ENCODE measurements at regions of chr20 and their contacts with region 1.

Region 1: DNA sequence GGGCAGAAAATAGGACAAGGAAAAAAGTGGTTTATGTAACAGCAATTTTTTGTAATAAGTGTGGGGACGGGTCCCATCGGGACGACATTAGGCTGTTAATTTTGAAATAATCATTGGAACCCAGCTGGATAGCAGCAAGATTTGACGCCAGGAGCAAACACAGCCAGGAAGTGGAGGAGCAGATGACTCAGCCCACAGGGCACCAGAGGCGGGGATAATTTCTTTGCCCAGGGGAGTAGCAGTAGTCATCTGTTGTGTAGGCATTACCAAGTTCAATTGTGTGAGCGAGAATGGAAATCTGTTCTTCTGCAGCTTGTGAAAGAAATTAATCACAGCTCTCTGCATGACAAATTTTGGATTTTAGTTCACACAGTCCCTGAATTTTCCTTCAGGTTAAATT is 22.6 kb upstream of the RIN2 start:
- DNase-seq: peak; percentile 70 to 84
- ATAC-seq: peak; percentile 96 to 97
- H3K4me3 ChIP-seq: no peak overlapping the region
- H3K27ac ChIP-seq: peak overlapping the region; percentile 66 to 81 (median 73)
- H3K4me1 ChIP-seq: peaks cover 10 to 30% of the 10 kb centered on the region in 2 donors
- H3K27me3 ChIP-seq: no peaks in the 10 kb centered on the region
- CTCF ChIP-seq: no peak
- POLR2A ChIP-seq: no peak

Region 2: DNA sequence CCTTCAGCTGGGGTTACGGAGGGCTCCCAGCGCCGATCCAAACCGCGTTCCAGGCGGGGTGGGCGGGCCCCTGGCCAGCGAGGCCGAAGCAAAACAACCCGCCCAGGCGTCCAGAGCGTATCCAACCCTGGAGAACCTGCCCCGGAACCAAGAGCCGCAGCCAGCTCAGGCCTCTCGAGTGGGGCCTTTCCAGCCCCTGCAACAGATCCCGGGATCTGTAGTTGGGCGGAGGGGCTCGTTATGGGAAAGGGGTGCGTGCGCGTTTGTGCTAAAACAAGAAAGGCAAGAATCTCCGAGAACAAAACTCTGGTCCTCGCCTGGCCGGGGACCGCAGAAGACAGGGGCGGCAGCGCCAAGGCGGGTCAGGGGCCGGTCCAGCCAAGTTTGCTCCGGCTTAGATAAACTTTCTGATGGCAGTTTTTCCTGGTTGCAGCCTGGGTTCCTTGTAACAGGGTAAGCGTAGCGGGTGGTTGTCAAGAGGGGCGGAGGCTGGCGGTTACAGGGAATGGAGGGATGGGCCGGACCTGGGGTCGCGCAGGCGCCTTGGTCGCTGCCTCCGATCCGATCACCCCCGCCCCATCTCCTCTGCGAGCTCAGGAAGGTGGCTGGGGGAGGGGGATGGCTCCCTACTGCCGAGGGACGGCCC is 22.2 kb after region 1 on chr20:
- in situ Hi-C with region 1: no loop called
- intact Hi-C with region 1: loop called (anchors 2 kb)
- DNase-seq: peak; percentile 89 to 91
- ATAC-seq: peak; percentile 67 to 72
- H3K4me3 ChIP-seq: peak overlapping the region; percentile 82 to 100 (median 94)
- H3K27ac ChIP-seq: peak overlapping the region; percentile 97 to 99 (median 98)
- H3K4me1 ChIP-seq: peaks cover 31 to 39% of the 10 kb centered on the region in 2 donors
- H3K27me3 ChIP-seq: no peaks in the 10 kb centered on the region
- CTCF ChIP-seq: no peak
- POLR2A ChIP-seq: peak; percentile 46 to 62

Region 3: GRCh38 chr20:19858466-19859371 is 123.3 kb after region 1 on chr20:
- in situ Hi-C with region 1: no loop called
- intact Hi-C with region 1: no loop called
- DNase-seq: peak in 1 of 2 donors; percentile 18
- ATAC-seq: no peak
- H3K4me3 ChIP-seq: no peak overlapping the region
- H3K27ac ChIP-seq: no peak overlapping the region
- H3K4me1 ChIP-seq: no peaks in the 10 kb centered on the region
- H3K27me3 ChIP-seq: no peaks in the 10 kb centered on the region
- CTCF ChIP-seq: no peak
- POLR2A ChIP-seq: no peak

Measured in gastrocnemius medialis (tissue), 4 donors.